Dorsolateral prefrontal cortex (tissue), 120 donors: ENCODE measurements at regions of chr12 and their contacts with region 1.

Region 1: GRCh38 chr12:49219417-49220026 is 30.6 kb upstream of the TUBA1A start:
- DNase-seq: no peak
- H3K4me3 ChIP-seq: no peak overlapping the region
- H3K27ac ChIP-seq: no peak overlapping the region
- H3K27me3 ChIP-seq: no peaks in the 10 kb centered on the region
- CTCF ChIP-seq: no peak

Region 2: DNA sequence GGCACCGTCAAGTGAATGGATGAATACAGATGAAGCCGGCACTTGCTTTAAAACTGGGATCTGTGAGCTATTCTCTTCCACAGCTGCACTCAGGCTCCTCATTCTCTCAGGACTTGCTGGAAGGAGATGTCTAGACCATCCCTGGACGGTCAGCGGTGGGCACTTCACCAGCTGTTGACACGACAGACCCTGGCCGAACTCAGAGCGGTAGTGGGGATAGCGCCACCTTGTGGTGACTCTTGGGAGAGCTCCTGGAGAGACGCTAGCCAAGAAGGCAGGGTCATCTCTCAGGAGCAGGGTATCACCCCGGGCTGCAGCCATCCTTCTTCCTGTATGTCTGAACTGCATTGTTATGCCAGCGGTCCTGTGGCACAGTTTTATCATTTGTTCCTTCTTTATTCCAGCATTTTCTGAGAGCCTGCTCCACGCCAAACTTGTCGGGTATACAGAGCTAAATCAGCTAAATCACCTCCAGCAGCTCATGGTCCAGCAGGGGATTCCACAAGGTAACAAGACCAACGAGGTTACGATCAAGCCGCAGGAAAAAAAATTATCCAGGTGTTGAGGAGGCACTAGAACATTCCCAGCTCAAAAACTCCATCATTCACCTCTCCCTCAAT is 231.4 kb before region 1 on chr12:
- intact Hi-C with region 1: no loop called
- DNase-seq: peak in 5 of 10 donors; percentile 59 to 77 (median 64)
- H3K4me3 ChIP-seq: peak overlapping the region in 2 of 59 donors; percentile 12 to 13
- H3K27ac ChIP-seq: no peak overlapping the region
- H3K27me3 ChIP-seq: peaks cover 0 to 57% (median 0%) of the 10 kb centered on the region in 45 donors
- CTCF ChIP-seq: peak; percentile 54 to 94 (median 82)

Region 3: DNA sequence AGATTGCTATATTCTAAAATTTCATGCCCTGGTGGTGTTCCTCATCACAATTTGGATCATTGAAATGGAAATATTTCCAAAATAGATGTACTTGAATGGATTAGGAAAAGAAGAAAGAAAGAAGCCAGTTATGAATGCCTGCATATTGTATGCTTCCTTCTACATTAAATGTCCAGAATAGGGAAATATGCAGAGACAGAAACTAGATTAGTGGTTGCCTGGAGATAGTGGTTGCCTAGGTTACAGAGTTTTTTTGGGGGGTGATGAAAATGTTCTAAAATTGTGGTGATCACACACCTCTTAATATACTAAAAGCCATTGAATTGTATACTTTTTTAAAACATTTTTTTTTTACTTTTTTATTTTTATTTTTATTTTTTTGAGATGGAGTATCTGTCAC is 48.6 kb before region 1 on chr12:
- intact Hi-C with region 1: no loop called
- DNase-seq: no peak
- H3K4me3 ChIP-seq: no peak overlapping the region
- H3K27ac ChIP-seq: peak overlapping the region in 20 of 59 donors; percentile 9 to 77 (median 56)
- H3K27me3 ChIP-seq: no peaks in the 10 kb centered on the region
- CTCF ChIP-seq: no peak

Region 4: GRCh38 chr12:49200919-49201594 is 18.5 kb before region 1 on chr12:
- intact Hi-C with region 1: loop called in 1 of 2 experiments (anchors 2 kb)
- DNase-seq: no peak
- H3K4me3 ChIP-seq: peak overlapping the region in 34 of 59 donors; percentile 1 to 49 (median 15)
- H3K27ac ChIP-seq: peak overlapping the region; percentile 26 to 95 (median 85)
- H3K27me3 ChIP-seq: no peaks in the 10 kb centered on the region
- CTCF ChIP-seq: no peak